ENCODE measurements at regions of chr11 and their contacts with region 1.

Region 1: GRCh38 chr11:10405855-10406592 is 49.0 kb upstream of the AMPD3 start:
- DNase-seq: peak; percentile 59
- CTCF ChIP-seq: peak; percentile 56

Region 2: DNA sequence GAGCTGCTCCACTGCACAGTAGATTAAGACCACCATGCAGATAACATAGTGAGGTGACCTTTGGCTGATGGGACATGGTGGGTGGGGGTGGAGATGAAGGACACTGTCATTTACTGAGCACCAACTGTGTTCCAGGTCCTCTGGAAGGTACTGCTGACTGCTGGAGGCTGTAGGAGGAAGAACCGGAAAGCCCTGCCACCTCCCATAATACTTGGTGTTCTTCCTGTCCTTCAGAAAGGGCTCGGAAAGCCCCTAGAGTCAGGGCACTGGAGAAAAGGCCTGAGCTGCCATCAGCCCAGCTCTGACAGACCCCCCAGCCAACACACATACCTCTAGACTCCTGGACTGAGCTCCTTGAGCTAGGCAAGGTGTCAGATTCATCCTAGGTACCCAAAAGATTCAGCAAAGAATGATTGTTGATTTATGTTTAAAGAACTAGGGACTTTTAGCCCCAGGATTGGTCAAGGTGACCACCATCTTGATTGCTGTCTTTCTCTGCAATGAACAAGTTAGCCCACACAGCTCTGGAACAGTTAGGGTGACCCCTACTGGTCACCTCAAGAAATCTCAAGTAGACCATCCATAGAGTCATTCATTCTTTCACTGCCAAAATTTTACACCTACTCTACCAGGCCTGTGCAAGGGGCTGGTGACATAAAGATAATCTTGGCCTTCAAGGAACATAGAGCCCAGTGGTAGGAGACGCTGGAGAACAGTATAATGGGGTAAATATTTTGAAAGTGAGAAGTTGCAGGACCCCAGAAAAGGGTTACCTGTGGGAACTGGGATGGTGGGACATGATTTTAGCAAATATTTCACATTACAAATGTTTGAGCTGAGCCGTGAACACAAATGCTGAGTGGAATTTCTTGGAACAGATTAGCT is 248.1 kb after region 1 on chr11:
- in situ Hi-C with region 1: loop called (anchors 10 kb)
- DNase-seq: peak; percentile 75
- CTCF ChIP-seq: peak; percentile 68

Region 3: DNA sequence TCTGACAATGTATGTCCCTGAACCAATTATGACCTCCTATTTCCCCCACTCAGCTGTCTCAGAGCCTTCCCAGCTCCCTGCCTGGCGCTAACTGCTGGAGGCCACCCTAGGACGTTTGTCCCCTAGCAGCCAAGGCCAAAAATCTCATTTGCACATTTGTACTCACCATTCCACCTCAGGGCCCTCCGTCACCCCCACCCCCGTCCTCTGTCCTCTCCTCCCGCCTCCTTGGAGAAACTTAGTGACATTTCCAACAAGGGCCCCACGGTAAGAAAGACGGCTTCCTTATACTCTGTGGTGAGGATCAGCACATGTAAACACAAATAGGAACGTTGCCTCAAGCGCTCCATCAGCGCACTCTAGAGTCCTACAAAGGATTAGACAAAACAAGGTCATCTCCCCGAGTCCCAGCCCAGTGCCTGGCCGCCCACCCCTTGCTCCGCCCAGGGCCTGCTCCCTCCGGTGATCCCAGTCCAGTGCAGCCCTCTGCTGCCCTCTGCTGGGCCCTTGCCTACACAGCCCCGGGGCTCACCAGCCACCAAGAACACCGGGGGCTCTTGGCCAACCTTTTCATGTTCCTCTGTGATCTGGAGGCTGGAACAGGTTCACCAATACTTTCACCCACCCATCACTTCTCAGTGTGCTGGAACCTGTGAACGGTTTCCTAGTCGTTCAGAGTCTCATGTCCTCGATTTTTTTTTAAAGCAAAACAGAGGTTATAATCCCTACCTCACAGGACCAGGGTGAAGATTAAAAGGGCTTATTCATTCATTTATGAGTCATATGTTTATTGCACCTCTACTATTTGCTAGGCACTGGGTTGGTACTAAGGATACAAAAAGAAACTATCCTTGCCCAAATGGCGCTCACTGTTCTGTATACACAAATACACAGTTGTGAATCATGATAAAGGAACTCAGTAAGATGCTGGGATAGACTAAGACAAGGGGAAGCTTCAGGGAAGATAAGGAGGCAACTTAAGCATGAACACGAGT is 329.8 kb after region 1 on chr11:
- in situ Hi-C with region 1: loop called (anchors 5 kb)
- DNase-seq: peak; percentile 87
- CTCF ChIP-seq: peak; percentile 92